Adrenal gland (tissue), 19 donors: ENCODE measurements at regions of chr14 and their contacts with region 1.

Region 1: DNA sequence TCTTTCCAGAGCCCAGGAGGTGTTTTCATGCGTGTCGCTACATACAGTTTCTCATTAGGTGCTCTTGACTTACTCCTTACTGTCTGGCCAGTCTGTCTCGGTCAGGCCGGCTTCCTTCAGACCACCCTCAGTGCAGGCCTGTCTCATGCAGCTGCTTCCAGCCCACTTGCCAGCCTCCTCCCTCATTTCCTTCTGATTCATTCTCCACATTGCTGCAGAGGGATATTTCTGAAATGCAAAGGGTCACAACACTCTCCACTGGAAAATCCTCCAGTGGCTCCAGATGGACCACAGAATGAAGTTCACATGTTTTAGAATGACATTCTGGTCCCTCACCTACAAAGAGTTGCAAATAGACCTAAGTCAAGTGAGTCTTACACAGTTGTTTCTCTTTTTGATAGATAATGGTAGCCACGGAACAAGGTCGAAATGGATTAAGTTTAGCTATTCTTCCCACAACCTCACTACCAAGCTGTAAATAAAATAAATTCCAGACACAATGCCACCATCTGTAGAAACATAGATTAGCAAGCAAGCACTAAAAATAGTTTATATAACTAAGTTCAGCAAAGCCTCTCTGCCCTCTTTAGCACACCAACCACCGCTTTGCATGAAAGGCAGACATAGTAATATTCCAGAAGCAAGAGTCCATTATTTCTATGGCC is 146.9 kb downstream of the ESR2 start:
- DNase-seq: no peak
- H3K4me3 ChIP-seq: no peak overlapping the region
- H3K27ac ChIP-seq: no peak overlapping the region
- H3K4me1 ChIP-seq: no peaks in the 10 kb centered on the region
- H3K27me3 ChIP-seq: no peaks in the 10 kb centered on the region
- CTCF ChIP-seq: no peak
- POLR2A ChIP-seq: no peak

Region 2: DNA sequence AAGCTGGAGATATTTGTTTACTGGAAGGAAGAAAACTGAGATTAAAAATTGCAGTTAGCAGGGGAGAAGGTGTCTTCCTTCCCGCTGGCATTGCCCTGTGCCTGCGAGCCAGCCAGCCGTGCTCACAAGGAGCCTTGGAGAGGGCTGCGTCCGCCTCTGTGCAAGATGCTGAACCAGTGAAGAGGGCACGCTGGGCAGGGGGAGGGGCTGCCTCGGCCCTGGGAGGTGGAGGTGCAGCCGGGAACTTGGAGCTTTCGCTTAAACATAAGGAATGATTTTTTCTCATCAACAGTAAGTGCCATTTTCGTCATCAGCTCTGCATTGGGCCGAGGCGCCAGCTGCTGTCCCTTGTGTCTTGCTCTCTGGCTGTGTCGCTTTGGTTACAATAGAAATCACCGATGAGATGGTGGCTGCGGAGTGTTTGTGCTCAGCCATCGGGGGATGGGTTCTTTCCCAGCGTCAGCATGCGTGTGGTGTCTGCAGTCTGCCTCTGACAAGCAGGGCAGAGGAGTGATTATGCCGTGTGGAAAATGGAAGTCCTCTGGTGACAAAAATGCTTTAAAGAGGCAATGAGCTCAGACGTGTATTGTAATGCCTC is 49.7 kb after region 1 on chr14:
- intact Hi-C with region 1: loop called in 1 of 2 experiments (anchors 10 kb)
- DNase-seq: peak; percentile 78 to 92 (median 84)
- H3K4me3 ChIP-seq: peak overlapping the region in 1 of 4 donors; percentile 45
- H3K27ac ChIP-seq: peak overlapping the region; percentile 27 to 93 (median 79)
- H3K4me1 ChIP-seq: peaks cover 44 to 71% of the 10 kb centered on the region in 2 donors
- H3K27me3 ChIP-seq: no peaks in the 10 kb centered on the region
- CTCF ChIP-seq: no peak
- POLR2A ChIP-seq: peak in 1 of 2 donors; percentile 80